ENCODE measurements at regions of chr1 and their contacts with region 1.

Region 1: DNA sequence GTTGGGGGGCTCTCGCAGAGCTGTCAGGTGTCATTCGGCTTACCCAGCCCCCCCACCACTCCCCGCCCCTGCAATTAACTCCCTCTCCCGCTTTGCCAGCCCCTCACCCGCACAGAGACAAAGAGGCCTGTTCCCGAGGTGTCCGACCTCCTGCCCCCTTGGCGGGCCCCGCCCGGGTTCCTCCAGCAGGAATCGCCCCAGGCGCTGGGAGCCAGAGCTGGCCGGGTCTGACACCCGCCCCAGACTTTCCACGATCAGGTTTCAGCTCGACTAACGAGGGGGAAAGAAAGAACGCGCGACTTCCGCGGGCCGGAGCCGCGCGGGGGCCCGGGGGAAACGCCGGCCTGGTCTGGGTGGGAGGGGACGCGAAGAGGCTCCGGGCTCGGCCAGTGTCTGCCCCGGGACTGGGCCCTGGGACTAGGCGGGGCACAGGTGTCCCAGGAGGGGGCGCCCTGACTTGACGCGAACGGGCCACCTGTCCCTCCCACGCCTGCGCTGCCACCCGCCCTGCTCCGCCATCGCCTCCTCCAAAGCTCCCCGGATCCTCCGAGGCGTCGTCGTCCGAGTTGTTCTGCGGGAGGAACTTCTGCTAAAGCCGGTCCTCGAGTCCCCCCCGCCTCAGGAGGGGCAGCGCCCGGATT is 36.4 kb upstream of the HHAT start:
- DNase-seq: peak; percentile 92
- H3K4me3 Mint-ChIP-seq: peak overlapping the region; percentile 72
- H3K27ac Mint-ChIP-seq: peak overlapping the region; percentile 60
- H3K4me1 Mint-ChIP-seq: peaks cover 8% of the 10 kb centered on the region
- H3K27me3 Mint-ChIP-seq: peaks cover 19% of the 10 kb centered on the region
- CTCF ChIP-seq: peak; percentile 59

Region 2: GRCh38 chr1:209723756-209724693 is 568.3 kb before region 1 on chr1:
- CTCF ChIA-PET with region 1: no interaction called
- intact Hi-C with region 1: no loop called
- DNase-seq: no peak
- H3K4me3 Mint-ChIP-seq: no peak overlapping the region
- H3K27ac Mint-ChIP-seq: no peak overlapping the region
- H3K4me1 Mint-ChIP-seq: no peaks in the 10 kb centered on the region
- H3K27me3 Mint-ChIP-seq: peaks cover 13% of the 10 kb centered on the region
- CTCF ChIP-seq: no peak

Region 3: GRCh38 chr1:210200124-210200736 is 92.1 kb before region 1 on chr1:
- CTCF ChIA-PET with region 1: no interaction called
- intact Hi-C with region 1: loop called (anchors 5 kb)
- DNase-seq: no peak
- H3K4me3 Mint-ChIP-seq: no peak overlapping the region
- H3K27ac Mint-ChIP-seq: no peak overlapping the region
- H3K4me1 Mint-ChIP-seq: peaks cover 18% of the 10 kb centered on the region
- H3K27me3 Mint-ChIP-seq: no peaks in the 10 kb centered on the region
- CTCF ChIP-seq: no peak

Region 4: DNA sequence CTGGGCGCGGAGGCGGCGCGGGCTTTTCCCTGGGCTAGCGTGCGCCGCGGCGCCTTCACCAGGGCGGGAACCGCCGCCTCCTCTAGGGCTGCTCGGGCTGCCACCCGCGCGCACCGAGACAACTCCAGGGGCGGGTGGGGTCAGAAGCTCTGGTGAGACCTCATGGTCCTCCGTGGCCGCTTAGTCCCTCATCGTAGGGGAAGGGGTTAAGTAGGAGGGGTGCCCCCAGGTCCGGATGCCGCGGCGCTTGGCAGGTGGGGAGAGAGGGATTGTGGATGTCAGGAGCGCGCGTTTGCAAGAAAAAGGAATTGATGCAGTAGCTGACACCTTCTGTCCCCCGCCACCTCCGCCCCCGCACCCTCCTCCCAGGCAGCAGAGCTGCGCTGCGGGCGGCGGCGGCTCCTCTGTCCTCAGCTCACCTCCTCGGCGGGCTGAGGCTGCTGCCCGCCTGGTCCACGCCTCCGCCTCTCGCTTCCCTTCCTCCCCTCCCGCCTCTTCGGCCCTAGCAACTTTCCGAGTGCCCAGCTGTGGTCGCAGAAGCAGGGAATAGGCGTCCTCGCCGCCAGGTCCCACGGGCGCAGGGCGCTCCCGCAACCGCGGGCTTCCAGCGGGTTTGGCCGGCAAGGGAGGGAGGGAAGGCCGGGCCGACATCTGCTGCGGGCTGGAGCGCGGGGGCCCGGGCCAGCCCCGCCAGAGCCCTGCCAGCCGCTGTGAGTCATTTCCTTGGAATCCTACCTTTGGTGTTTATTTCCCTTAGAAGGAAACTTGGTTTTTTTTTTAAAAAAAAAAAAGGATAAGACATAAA is 58.9 kb before region 1 on chr1:
- CTCF ChIA-PET with region 1: interaction called, 13 read pairs
- intact Hi-C with region 1: loop called (anchors 5 kb)
- DNase-seq: peak; percentile 69
- H3K4me3 Mint-ChIP-seq: peak overlapping the region; percentile 74
- H3K27ac Mint-ChIP-seq: no peak overlapping the region
- H3K4me1 Mint-ChIP-seq: peaks cover 31% of the 10 kb centered on the region
- H3K27me3 Mint-ChIP-seq: no peaks in the 10 kb centered on the region
- CTCF ChIP-seq: no peak

Region 5: DNA sequence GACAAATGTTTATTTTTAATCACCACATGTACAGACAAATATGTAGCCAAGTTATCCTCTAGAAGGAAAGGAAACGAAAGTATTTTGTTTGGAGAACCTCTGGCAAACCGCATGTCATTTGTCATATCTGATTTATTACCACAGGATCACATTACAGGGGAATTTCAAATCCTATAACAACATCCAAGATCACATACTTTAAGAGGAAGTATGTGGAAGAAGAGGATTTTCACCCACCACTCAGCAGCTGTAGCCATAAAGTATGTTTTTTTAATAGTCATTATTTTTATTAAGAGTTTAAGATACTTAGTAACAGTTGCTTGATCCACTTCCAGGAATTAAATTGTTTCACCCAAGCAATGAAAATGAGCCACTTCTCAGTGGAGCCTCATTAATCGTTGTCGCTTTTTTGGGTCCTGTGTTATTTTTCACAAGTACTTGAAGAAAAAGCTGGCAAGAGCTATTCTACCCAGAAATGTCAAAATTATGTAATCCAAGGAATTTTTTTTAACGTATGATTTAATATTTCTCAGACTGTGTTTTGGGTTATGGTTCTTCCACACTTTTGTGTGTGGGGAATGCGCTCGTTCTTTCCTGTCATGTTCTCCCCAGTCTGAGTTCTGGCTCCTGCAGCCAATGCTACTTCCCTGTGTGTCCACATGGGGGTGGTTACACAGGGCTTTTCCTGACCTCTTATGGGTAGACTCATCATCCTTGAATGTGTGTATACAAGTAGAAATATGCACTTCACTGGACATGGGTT is 52.8 kb before region 1 on chr1:
- CTCF ChIA-PET with region 1: interaction called, 13 read pairs
- intact Hi-C with region 1: loop called (anchors 5 kb)
- DNase-seq: peak; percentile 36
- H3K4me3 Mint-ChIP-seq: no peak overlapping the region
- H3K27ac Mint-ChIP-seq: peak overlapping the region; percentile 20
- H3K4me1 Mint-ChIP-seq: peaks cover 44% of the 10 kb centered on the region
- H3K27me3 Mint-ChIP-seq: no peaks in the 10 kb centered on the region
- CTCF ChIP-seq: peak; percentile 54

Region 6: GRCh38 chr1:210373885-210374599 is 81.7 kb after region 1 on chr1:
- CTCF ChIA-PET with region 1: no interaction called
- intact Hi-C with region 1: no loop called
- DNase-seq: peak; percentile 93
- H3K4me3 Mint-ChIP-seq: peak overlapping the region; percentile 65
- H3K27ac Mint-ChIP-seq: peak overlapping the region; percentile 96
- H3K4me1 Mint-ChIP-seq: peaks cover 21% of the 10 kb centered on the region
- H3K27me3 Mint-ChIP-seq: no peaks in the 10 kb centered on the region
- CTCF ChIP-seq: peak; percentile 83

Measured in Calu3 (cell line).